T-cell (primary cell): ENCODE measurements at regions of chr12 and their contacts with region 1.

Region 1: DNA sequence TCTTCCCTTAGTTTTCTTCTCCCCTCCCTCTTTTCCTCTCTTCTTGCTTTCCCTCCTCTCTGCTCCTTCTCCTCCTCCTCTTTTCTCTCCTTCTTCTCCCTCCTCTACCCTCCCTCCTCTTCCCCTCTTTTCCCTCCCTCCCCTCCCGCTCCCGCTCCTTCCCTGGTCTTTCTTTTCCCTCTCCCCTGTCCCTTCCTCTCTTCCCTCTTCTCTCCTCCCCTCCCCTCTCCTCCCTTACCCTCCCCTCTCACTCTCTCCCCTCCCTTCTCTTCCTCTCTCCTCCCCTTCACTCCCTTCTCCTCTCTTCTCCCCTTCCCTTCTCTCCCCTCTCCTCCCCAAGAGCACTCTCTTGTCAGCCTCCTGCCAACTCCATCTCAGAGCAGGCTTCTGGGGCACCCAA is 17.4 kb upstream of the FBXO21 start:
- DNase-seq: no peak
- ATAC-seq: no peak
- H3K4me3 ChIP-seq: no peak overlapping the region
- H3K4me3 Mint-ChIP-seq: no peak overlapping the region
- H3K27ac ChIP-seq: no peak overlapping the region
- H3K27ac Mint-ChIP-seq: no peak overlapping the region
- H3K4me1 ChIP-seq: no peaks in the 10 kb centered on the region
- H3K4me1 Mint-ChIP-seq: no peaks in the 10 kb centered on the region
- H3K27me3 ChIP-seq: peaks cover 0 to 37% of the 10 kb centered on the region in 2 experiments
- H3K27me3 Mint-ChIP-seq: peaks cover 26 to 29% of the 10 kb centered on the region in 2 donors

Region 2: DNA sequence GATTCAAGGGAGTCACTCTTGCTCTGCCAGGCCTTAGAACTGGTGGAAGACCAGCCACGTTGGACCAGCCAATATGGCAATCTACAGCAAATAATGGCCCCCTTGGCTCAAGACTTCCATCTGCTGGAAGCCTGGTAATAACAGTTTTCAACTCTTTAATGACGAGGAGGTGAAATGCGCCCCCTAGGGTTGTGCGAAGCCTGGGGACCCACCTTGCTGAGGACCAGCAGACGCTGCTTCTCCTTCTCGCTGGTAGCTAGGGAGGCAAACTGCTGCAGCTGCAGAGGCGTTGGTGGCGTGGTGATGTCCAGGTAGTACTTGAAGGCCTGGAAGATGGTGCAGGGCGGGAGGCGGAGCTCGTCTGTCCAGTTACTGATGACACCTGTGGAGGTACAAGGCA is 24.1 kb after region 1 on chr12:
- CTCF ChIA-PET with region 1: no interaction called
- POLR2A ChIA-PET with region 1: no interaction called
- DNase-seq: no peak
- ATAC-seq: no peak
- H3K4me3 ChIP-seq: no peak overlapping the region
- H3K4me3 Mint-ChIP-seq: no peak overlapping the region
- H3K27ac ChIP-seq: no peak overlapping the region
- H3K27ac Mint-ChIP-seq: no peak overlapping the region
- H3K4me1 ChIP-seq: no peaks in the 10 kb centered on the region
- H3K4me1 Mint-ChIP-seq: peaks cover 0 to 2% (median 0%) of the 10 kb centered on the region in 3 donors
- H3K27me3 ChIP-seq: peaks cover 4 to 23% of the 10 kb centered on the region in 2 experiments
- H3K27me3 Mint-ChIP-seq: peaks cover 28 to 35% of the 10 kb centered on the region in 2 donors

Region 3: DNA sequence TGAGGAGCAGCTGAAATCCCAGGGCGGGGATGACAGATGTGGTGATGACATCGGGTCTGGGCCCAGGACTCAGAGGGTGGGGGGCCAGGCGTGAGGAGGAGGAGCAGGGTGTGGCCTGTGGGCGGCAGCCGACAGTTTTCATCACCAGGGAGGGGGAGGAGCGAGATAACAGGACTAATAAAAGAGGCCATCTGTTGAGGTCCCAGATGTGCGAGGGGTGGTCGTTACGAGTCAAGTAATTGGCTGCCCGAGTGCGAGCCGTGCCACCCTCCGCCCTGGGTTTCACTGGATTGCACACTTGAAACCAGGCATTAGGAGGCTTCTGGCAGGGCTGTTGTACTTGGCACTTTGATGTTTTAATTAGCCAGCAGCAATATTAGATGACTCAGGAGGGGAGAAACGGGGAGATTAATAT is 86.5 kb after region 1 on chr12:
- CTCF ChIA-PET with region 1: no interaction called
- POLR2A ChIA-PET with region 1: interaction called in 1 of 2 experiments, 13 read pairs
- DNase-seq: no peak
- ATAC-seq: no peak
- H3K4me3 ChIP-seq: no peak overlapping the region
- H3K4me3 Mint-ChIP-seq: no peak overlapping the region
- H3K27ac ChIP-seq: no peak overlapping the region
- H3K27ac Mint-ChIP-seq: no peak overlapping the region
- H3K4me1 ChIP-seq: no peaks in the 10 kb centered on the region
- H3K4me1 Mint-ChIP-seq: no peaks in the 10 kb centered on the region
- H3K27me3 ChIP-seq: peaks cover 0 to 19% of the 10 kb centered on the region in 2 experiments
- H3K27me3 Mint-ChIP-seq: peaks cover 13 to 36% of the 10 kb centered on the region in 2 donors